B cell (primary cell): ENCODE measurements at regions of chr1 and their contacts with region 1.

Region 1: GRCh38 chr1:234309598-234310459 is 63.4 kb upstream of the COA6 start:
- DNase-seq: peak; percentile 74
- ATAC-seq: peak; percentile 85
- H3K4me3 ChIP-seq: no peak overlapping the region
- H3K4me3 Mint-ChIP-seq: peak overlapping the region; percentile 23
- H3K27ac ChIP-seq: no peak overlapping the region
- H3K27ac Mint-ChIP-seq: no peak overlapping the region
- H3K4me1 ChIP-seq: peaks cover 0 to 9% of the 10 kb centered on the region in 2 donors
- H3K4me1 Mint-ChIP-seq: peaks cover 5% of the 10 kb centered on the region
- H3K27me3 ChIP-seq: no peaks in the 10 kb centered on the region
- H3K27me3 Mint-ChIP-seq: peaks cover 22% of the 10 kb centered on the region
- CTCF ChIP-seq: peak; percentile 84

Region 2: GRCh38 chr1:232978091-232978634 is 1331.7 kb before region 1 on chr1:
- CTCF ChIA-PET with region 1: no interaction called
- POLR2A ChIA-PET with region 1: no interaction called
- intact Hi-C with region 1: no loop called
- DNase-seq: no peak
- ATAC-seq: no peak
- H3K4me3 ChIP-seq: no peak overlapping the region
- H3K4me3 Mint-ChIP-seq: no peak overlapping the region
- H3K27ac ChIP-seq: no peak overlapping the region
- H3K27ac Mint-ChIP-seq: peak overlapping the region; percentile 70
- H3K4me1 ChIP-seq: peaks cover 4 to 10% of the 10 kb centered on the region in 2 donors
- H3K4me1 Mint-ChIP-seq: peaks cover 7% of the 10 kb centered on the region
- H3K27me3 ChIP-seq: no peaks in the 10 kb centered on the region
- H3K27me3 Mint-ChIP-seq: no peaks in the 10 kb centered on the region
- CTCF ChIP-seq: no peak

Region 3: GRCh38 chr1:234281826-234282489 is 27.9 kb before region 1 on chr1:
- CTCF ChIA-PET with region 1: interaction called, 11 read pairs
- POLR2A ChIA-PET with region 1: no interaction called
- intact Hi-C with region 1: no loop called
- DNase-seq: no peak
- ATAC-seq: no peak
- H3K4me3 ChIP-seq: no peak overlapping the region
- H3K4me3 Mint-ChIP-seq: no peak overlapping the region
- H3K27ac ChIP-seq: no peak overlapping the region
- H3K27ac Mint-ChIP-seq: no peak overlapping the region
- H3K4me1 ChIP-seq: no peaks in the 10 kb centered on the region
- H3K4me1 Mint-ChIP-seq: no peaks in the 10 kb centered on the region
- H3K27me3 ChIP-seq: peaks cover 0 to 8% (median 0%) of the 10 kb centered on the region in 4 experiments
- H3K27me3 Mint-ChIP-seq: peaks cover 28% of the 10 kb centered on the region
- CTCF ChIP-seq: no peak

Region 4: GRCh38 chr1:234326497-234327366 is 16.9 kb after region 1 on chr1:
- CTCF ChIA-PET with region 1: interaction called, 57 read pairs
- POLR2A ChIA-PET with region 1: no interaction called
- intact Hi-C with region 1: no loop called
- DNase-seq: peak; percentile 72
- ATAC-seq: peak; percentile 78
- H3K4me3 ChIP-seq: peak overlapping the region; percentile 30 to 68 (median 56)
- H3K4me3 Mint-ChIP-seq: peak overlapping the region; percentile 61
- H3K27ac ChIP-seq: no peak overlapping the region
- H3K27ac Mint-ChIP-seq: no peak overlapping the region
- H3K4me1 ChIP-seq: peaks cover 0 to 26% of the 10 kb centered on the region in 2 donors
- H3K4me1 Mint-ChIP-seq: peaks cover 25% of the 10 kb centered on the region
- H3K27me3 ChIP-seq: peaks cover 0 to 25% (median 2%) of the 10 kb centered on the region in 4 experiments
- H3K27me3 Mint-ChIP-seq: peaks cover 31% of the 10 kb centered on the region
- CTCF ChIP-seq: peak; percentile 81